ENCODE measurements at regions of chr9 and their contacts with region 1.

Region 1: GRCh38 chr9:503881-504852 is 289.5 kb downstream of the DOCK8 start:
- DNase-seq: peak; percentile 82
- H3K4me3 Mint-ChIP-seq: peak within 1 kb of the TSS; percentile 82
- H3K27ac Mint-ChIP-seq: peak within 1 kb of the TSS; percentile 37
- H3K4me1 Mint-ChIP-seq: peaks cover 18% of the 10 kb centered on the region
- H3K27me3 Mint-ChIP-seq: no peaks in the 10 kb centered on the region
- CTCF ChIP-seq: peak; percentile 21

Region 2: DNA sequence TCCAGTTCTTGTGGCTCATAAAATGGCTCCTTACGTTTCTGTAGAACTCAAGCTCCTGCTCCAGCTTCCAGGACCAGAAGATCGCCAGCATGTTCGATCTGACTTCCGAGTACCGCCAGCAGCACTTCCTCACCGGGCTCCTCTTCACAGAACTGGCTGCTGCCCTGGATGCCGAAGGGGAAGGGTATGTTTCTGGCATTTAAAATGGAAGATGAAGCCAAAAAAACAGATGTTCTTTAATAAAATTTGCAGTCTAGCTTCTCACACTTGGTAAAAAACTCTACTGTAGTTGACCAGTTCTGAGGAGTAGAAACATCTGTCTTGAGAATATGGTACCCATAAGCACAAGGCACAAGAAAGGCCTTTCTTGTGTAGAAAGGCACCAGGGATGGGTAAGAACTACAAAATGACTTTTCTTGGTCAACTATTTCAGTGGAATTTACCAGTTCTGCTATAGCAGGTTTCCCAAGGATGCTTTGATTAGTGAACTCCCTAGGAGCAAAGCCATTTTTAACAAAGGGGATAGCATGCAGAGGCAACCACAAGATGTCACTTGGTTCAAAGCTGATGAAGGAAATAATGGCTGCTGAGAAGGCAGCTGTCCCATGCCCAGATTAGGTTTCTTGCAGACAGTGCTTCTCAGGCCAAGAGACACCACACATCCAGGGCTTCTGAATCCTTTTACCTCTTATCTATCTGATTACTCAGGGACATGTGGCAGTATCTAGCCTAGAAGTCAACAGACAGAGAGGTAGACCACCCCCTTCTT is 97.1 kb before region 1 on chr9:
- CTCF ChIA-PET with region 1: no interaction called
- POLR2A ChIA-PET with region 1: no interaction called
- intact Hi-C with region 1: loop called (anchors 2 kb)
- DNase-seq: peak; percentile 26
- H3K4me3 Mint-ChIP-seq: no peak overlapping the region
- H3K27ac Mint-ChIP-seq: no peak overlapping the region
- H3K4me1 Mint-ChIP-seq: no peaks in the 10 kb centered on the region
- H3K27me3 Mint-ChIP-seq: no peaks in the 10 kb centered on the region
- CTCF ChIP-seq: peak; percentile 18

Region 3: DNA sequence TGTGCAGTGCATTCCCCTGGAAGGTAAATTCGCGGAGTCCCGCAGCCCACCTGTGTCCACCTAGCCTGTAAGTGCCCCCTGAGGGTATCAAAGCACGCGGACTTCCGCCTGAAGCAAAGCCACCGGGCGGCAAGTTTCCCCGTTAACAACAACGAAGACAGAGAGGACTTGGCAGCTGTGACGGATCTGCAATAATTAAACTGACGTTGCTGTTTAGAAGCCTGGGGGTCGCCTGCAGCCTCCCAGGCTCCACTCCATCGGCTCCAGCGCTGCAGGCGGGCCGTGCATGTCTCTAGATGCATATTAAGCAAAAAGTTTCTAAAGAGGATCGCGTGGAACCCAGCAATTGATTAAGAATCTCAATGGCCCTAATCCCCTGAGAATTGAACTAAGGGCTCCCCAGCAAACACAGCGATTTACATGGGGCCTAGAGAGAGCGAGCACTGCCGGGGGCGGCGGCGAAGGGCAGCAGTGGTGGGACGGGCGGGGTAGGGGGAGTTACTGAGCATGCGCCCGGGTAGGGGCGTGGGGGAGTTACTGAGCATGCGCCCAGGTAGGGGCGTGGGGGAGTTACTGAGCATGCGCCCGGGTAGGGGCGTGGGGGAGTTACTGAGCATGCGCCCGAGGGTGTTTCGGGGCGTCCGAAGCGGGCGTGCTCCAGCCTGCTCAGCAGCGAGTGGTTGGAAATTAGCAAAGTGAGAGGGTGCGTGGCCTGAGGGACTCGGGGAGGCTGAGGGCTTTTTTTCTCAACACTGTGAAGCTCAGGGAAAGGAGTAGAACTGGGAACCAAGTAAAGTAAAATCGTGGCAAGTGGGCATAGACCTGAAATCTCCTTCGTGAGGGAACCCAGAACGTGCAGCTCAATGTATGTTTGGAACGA is 34.3 kb before region 1 on chr9:
- CTCF ChIA-PET with region 1: interaction called, 4 read pairs
- POLR2A ChIA-PET with region 1: interaction called, 14 read pairs
- intact Hi-C with region 1: no loop called
- DNase-seq: peak; percentile 91
- H3K4me3 Mint-ChIP-seq: peak overlapping the region; percentile 87
- H3K27ac Mint-ChIP-seq: peak overlapping the region; percentile 86
- H3K4me1 Mint-ChIP-seq: peaks cover 22% of the 10 kb centered on the region
- H3K27me3 Mint-ChIP-seq: no peaks in the 10 kb centered on the region
- CTCF ChIP-seq: no peak

Measured in MCF 10A (cell line).